Natural killer cell (primary cell): ENCODE measurements at regions of chr16 and their contacts with region 1.

Region 1: GRCh38 chr16:75519881-75520280 is 16.0 kb downstream of the CHST5 start:
- DNase-seq: no peak
- ATAC-seq: no peak
- H3K4me3 ChIP-seq: no peak overlapping the region
- H3K4me3 Mint-ChIP-seq: peak overlapping the region; percentile 17
- H3K27ac ChIP-seq: no peak overlapping the region
- H3K27ac Mint-ChIP-seq: no peak overlapping the region
- H3K4me1 ChIP-seq: peaks cover 11% of the 10 kb centered on the region
- H3K4me1 Mint-ChIP-seq: peaks cover 10 to 12% of the 10 kb centered on the region in 2 donors
- H3K27me3 ChIP-seq: no peaks in the 10 kb centered on the region
- H3K27me3 Mint-ChIP-seq: no peaks in the 10 kb centered on the region
- CTCF ChIP-seq: no peak

Region 2: DNA sequence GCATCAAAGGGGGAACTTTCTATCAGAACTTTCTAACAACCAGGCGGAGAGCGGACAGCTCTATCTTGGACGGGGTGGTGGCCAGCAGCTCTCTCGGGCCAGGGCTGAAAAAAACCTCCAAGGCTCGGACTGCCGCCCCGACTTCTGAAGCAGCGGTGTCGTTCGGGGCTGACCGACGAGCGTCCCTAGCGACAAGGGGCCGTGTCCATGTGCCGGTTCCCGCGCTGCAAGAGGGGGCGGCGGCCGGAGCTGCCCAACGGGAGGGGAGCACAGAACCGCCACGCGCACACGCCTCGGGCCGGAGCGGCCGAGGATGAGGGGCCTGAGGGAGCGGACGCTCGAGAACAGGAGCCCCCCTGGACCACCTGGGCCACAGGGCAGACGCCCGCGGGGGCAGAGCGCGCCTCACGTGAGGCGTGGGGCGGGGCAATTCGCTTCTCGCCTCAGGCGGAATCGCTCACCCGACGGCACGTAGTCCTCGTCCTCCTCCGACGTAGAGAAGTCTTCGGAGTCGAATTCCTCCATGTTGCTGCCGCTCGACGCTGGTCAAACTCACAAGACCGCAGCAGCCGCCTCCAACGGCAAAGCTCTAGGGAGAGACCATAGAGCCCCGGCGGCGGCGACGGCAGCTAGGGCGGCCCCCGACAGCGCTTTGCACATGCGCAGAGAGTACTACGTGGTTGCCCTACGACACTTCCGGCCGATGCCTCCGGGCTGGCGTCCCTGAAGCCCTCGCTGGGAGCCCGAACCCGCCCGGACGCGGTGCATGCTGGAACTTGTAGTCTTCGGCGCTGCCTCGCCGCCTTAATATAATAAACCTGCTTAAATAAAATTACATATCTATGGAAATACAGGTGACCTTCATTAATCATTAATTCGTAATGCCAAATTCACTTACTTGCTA is 86.8 kb before region 1 on chr16 and contains the start of gene CFDP1:
- intact Hi-C with region 1: loop called (anchors 1 kb)
- DNase-seq: peak; percentile 93 to 98
- ATAC-seq: peak; percentile 83 to 93 (median 87)
- H3K4me3 ChIP-seq: peak within 1 kb of the TSS; percentile 86
- H3K4me3 Mint-ChIP-seq: peak within 1 kb of the TSS; percentile 96
- H3K27ac ChIP-seq: peak within 1 kb of the TSS; percentile 94
- H3K27ac Mint-ChIP-seq: peak within 1 kb of the TSS; percentile 96 to 99
- H3K4me1 ChIP-seq: peaks cover 19% of the 10 kb centered on the region
- H3K4me1 Mint-ChIP-seq: peaks cover 22 to 26% of the 10 kb centered on the region in 2 donors
- H3K27me3 ChIP-seq: no peaks in the 10 kb centered on the region
- H3K27me3 Mint-ChIP-seq: no peaks in the 10 kb centered on the region
- CTCF ChIP-seq: no peak
- total RNA-seq, gene CFDP1: 32.2 to 38.8 (median 32.3) TPM

Region 3: GRCh38 chr16:75464130-75464918 is 55.6 kb before region 1 on chr16 and contains the start of gene TMEM170A:
- intact Hi-C with region 1: loop called (anchors 1 kb)
- DNase-seq: peak; percentile 98 to 99
- ATAC-seq: peak; percentile 89 to 97 (median 91)
- H3K4me3 ChIP-seq: peak within 1 kb of the TSS; percentile 82
- H3K4me3 Mint-ChIP-seq: peak within 1 kb of the TSS; percentile 97
- H3K27ac ChIP-seq: peak within 1 kb of the TSS; percentile 99
- H3K27ac Mint-ChIP-seq: peak within 1 kb of the TSS; percentile 95 to 97
- H3K4me1 ChIP-seq: peaks cover 13% of the 10 kb centered on the region
- H3K4me1 Mint-ChIP-seq: peaks cover 46 to 52% of the 10 kb centered on the region in 2 donors
- H3K27me3 ChIP-seq: no peaks in the 10 kb centered on the region
- H3K27me3 Mint-ChIP-seq: no peaks in the 10 kb centered on the region
- CTCF ChIP-seq: no peak
- total RNA-seq, gene TMEM170A: 51.5 to 61.0 (median 53.9) TPM

Region 4: DNA sequence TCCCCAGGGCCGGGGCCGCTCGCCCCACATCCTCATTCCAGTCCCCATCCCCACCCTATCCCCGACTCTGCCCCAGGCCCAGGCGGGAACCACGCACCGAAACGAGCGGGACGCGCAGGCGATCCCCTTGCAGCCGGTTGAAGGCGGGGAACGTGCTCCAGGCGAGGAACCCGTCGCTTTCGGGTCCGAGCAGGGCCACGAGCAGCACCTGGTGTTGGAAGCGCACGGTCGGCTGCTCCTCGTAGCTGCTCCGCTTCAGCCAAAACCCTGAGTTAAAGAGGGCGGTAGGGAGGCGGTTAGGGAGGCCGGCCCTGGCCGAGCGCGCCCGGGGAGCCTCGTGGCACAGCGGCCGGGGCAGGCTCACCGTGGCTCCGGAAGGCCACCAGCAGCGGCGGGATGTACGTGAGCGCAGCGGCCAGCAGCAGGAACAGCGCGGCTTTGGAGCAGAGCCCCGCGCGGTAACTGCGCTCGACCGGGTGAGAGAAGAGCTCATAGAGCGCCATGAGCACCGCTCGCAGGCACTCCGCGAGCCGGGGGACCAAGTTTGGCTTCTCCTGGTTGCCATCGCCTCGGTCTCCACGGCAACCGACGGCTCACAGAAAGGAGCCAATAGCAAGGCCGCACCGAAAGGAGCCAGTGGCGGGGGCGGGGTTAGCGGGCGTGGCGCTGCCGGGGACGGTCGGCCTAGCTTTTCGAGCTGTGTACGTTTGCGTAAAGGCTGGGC is 36.0 kb after region 1 on chr16 and contains the start of gene TMEM231:
- intact Hi-C with region 1: loop called (anchors 1 kb)
- DNase-seq: peak; percentile 90 to 97
- ATAC-seq: peak; percentile 96 to 97 (median 97)
- H3K4me3 ChIP-seq: peak within 1 kb of the TSS; percentile 43
- H3K4me3 Mint-ChIP-seq: peak within 1 kb of the TSS; percentile 93
- H3K27ac ChIP-seq: peak within 1 kb of the TSS; percentile 73
- H3K27ac Mint-ChIP-seq: peak within 1 kb of the TSS; percentile 77 to 94
- H3K4me1 ChIP-seq: peaks cover 15% of the 10 kb centered on the region
- H3K4me1 Mint-ChIP-seq: peaks cover 11% of the 10 kb centered on the region in 2 donors
- H3K27me3 ChIP-seq: no peaks in the 10 kb centered on the region
- H3K27me3 Mint-ChIP-seq: peaks cover 9 to 17% of the 10 kb centered on the region in 2 donors
- CTCF ChIP-seq: no peak
- total RNA-seq, gene TMEM231: 2.1 to 2.7 (median 2.4) TPM

Region 5: GRCh38 chr16:75622761-75623605 is 103.1 kb after region 1 on chr16 and contains the start of gene ADAT1:
- intact Hi-C with region 1: loop called (anchors 2 kb)
- DNase-seq: peak; percentile 95 to 99
- ATAC-seq: peak; percentile 95 to 98 (median 95)
- H3K4me3 ChIP-seq: peak within 1 kb of the TSS; percentile 90
- H3K4me3 Mint-ChIP-seq: peak within 1 kb of the TSS; percentile 91
- H3K27ac ChIP-seq: peak within 1 kb of the TSS; percentile 93
- H3K27ac Mint-ChIP-seq: peak within 1 kb of the TSS; percentile 93 to 98
- H3K4me1 ChIP-seq: peaks cover 35% of the 10 kb centered on the region
- H3K4me1 Mint-ChIP-seq: peaks cover 41 to 42% of the 10 kb centered on the region in 2 donors
- H3K27me3 ChIP-seq: no peaks in the 10 kb centered on the region
- H3K27me3 Mint-ChIP-seq: no peaks in the 10 kb centered on the region
- CTCF ChIP-seq: no peak
- total RNA-seq, gene ADAT1: 63.5 to 65.2 (median 64.8) TPM